ENCODE measurements at regions of chr7 and their contacts with region 1.

Region 1: GRCh38 chr7:49791088-49791741 is 17.8 kb downstream of the VWC2 start:
- DNase-seq: peak in 1 of 2 experiments; percentile 38
- H3K4me3 ChIP-seq: no peak overlapping the region
- H3K4me3 Mint-ChIP-seq: no peak overlapping the region
- H3K27ac Mint-ChIP-seq: no peak overlapping the region
- H3K4me1 ChIP-seq: no peaks in the 10 kb centered on the region
- H3K4me1 Mint-ChIP-seq: no peaks in the 10 kb centered on the region
- H3K27me3 ChIP-seq: no peaks in the 10 kb centered on the region; the same call in 1 of the 2 replicates
- H3K27me3 Mint-ChIP-seq: peaks cover 9% of the 10 kb centered on the region
- CTCF ChIP-seq: peak; percentile 44 to 55

Region 2: DNA sequence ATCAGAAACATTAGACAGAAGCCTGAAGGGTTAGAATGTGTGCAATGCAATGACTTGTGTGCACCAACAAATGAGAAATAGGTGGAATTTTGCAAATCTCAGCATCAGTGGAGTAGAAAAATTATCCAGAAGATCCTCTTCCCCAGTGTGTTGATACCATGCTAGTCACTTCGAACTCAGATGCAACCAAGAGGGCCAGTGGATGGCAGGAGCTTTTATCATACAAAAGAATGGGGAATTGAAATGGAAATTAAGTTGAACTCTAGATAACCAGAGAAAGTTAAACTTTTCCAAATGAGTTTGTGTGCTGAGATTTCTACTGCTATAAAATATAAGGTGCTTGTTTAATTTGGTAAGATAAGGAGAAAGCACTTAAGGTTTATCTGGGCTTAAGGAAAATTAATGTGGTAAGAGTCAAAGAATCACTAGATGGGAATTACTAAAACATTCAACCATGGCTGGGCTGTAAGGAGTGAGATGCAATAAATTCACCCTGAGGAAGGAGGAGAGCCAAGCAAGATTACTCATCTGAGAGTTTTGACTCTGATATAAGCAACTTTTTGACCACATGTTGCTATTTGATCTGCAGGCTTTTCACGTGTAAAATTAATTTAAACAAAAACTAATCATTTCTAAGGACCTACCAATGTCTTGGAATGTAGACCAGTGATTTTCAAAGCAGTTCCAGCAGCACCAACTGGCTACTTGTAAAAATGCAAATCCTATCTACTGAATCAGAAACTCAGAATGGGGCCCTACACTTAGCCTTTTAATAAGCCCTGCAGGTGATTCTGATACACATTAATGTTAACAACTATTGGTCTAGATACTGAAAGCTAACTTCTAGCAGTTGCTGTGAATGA is 753.6 kb before region 1 on chr7:
- CTCF ChIA-PET with region 1: no interaction called
- POLR2A ChIA-PET with region 1: no interaction called
- intact Hi-C with region 1: no loop called
- DNase-seq: no peak
- H3K4me3 ChIP-seq: no peak overlapping the region
- H3K4me3 Mint-ChIP-seq: no peak overlapping the region
- H3K27ac Mint-ChIP-seq: no peak overlapping the region
- H3K4me1 ChIP-seq: no peaks in the 10 kb centered on the region
- H3K4me1 Mint-ChIP-seq: no peaks in the 10 kb centered on the region
- H3K27me3 ChIP-seq: no peaks in the 10 kb centered on the region
- H3K27me3 Mint-ChIP-seq: peaks cover 3% of the 10 kb centered on the region
- CTCF ChIP-seq: no peak

Region 3: DNA sequence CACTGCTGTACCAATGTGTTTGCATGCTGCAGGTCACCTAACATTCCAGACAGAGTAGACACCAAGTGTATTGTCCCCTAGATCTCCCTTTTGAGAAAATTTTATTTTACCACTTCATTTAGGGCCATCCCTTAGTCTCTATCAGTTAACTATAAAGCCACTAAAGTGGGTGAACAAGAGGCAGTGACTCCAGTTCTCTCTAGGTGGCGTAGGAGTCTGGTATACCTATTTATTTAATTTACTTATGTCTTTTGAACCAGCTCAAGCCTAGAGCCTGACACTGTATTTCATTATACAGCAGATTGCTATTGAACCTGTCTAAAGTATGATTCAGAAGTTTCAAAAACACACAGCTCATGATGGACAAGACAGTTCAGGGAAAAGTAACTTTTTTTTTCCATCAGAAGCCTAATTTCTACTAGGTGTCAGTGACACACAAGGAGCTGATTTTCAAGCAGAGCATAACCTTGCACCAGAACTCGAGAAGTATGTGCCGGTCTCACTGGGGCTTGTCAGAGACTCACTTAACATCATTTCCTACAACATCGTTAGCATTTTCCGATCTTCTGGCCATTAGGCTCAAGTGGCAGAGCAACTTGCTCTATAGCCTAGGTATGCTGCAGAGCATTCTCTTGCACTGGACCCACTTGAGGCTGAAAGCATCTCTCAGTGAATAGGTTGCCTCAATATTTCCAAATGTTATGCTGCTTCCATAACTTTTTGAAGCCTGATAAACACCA is 691.5 kb before region 1 on chr7:
- CTCF ChIA-PET with region 1: no interaction called
- POLR2A ChIA-PET with region 1: no interaction called
- intact Hi-C with region 1: loop called (anchors 10 kb)
- DNase-seq: no peak
- H3K4me3 ChIP-seq: no peak overlapping the region
- H3K4me3 Mint-ChIP-seq: no peak overlapping the region
- H3K27ac Mint-ChIP-seq: no peak overlapping the region
- H3K4me1 ChIP-seq: no peaks in the 10 kb centered on the region
- H3K4me1 Mint-ChIP-seq: no peaks in the 10 kb centered on the region
- H3K27me3 ChIP-seq: no peaks in the 10 kb centered on the region
- H3K27me3 Mint-ChIP-seq: peaks cover 5% of the 10 kb centered on the region
- CTCF ChIP-seq: peak in 1 of 2 experiments; percentile 20

Region 4: GRCh38 chr7:49483142-49483541 is 308.1 kb before region 1 on chr7:
- CTCF ChIA-PET with region 1: no interaction called
- POLR2A ChIA-PET with region 1: no interaction called
- intact Hi-C with region 1: loop called (anchors 1 kb)
- DNase-seq: peak; percentile 17 to 35
- H3K4me3 ChIP-seq: no peak overlapping the region
- H3K4me3 Mint-ChIP-seq: no peak overlapping the region
- H3K27ac Mint-ChIP-seq: no peak overlapping the region
- H3K4me1 ChIP-seq: peaks cover 6% of the 10 kb centered on the region; the same call in 1 of the 2 replicates
- H3K4me1 Mint-ChIP-seq: no peaks in the 10 kb centered on the region
- H3K27me3 ChIP-seq: no peaks in the 10 kb centered on the region
- H3K27me3 Mint-ChIP-seq: peaks cover 7% of the 10 kb centered on the region
- CTCF ChIP-seq: peak; percentile 26 to 47

Region 5: GRCh38 chr7:49768835-49769234 is 22.4 kb before region 1 on chr7:
- CTCF ChIA-PET with region 1: no interaction called
- POLR2A ChIA-PET with region 1: no interaction called
- intact Hi-C with region 1: no loop called
- DNase-seq: no peak
- H3K4me3 ChIP-seq: no peak overlapping the region
- H3K4me3 Mint-ChIP-seq: no peak overlapping the region
- H3K27ac Mint-ChIP-seq: no peak overlapping the region
- H3K4me1 ChIP-seq: no peaks in the 10 kb centered on the region
- H3K4me1 Mint-ChIP-seq: no peaks in the 10 kb centered on the region
- H3K27me3 ChIP-seq: no peaks in the 10 kb centered on the region; the same call in 1 of the 2 replicates
- H3K27me3 Mint-ChIP-seq: peaks cover 20% of the 10 kb centered on the region
- CTCF ChIP-seq: no peak

Region 6: GRCh38 chr7:50095634-50096033 is 304.4 kb after region 1 on chr7:
- CTCF ChIA-PET with region 1: no interaction called
- POLR2A ChIA-PET with region 1: no interaction called
- intact Hi-C with region 1: no loop called
- DNase-seq: no peak
- H3K4me3 ChIP-seq: no peak overlapping the region
- H3K4me3 Mint-ChIP-seq: no peak overlapping the region
- H3K27ac Mint-ChIP-seq: no peak overlapping the region
- H3K4me1 ChIP-seq: no peaks in the 10 kb centered on the region
- H3K4me1 Mint-ChIP-seq: no peaks in the 10 kb centered on the region
- H3K27me3 ChIP-seq: no peaks in the 10 kb centered on the region
- H3K27me3 Mint-ChIP-seq: peaks cover 5% of the 10 kb centered on the region
- CTCF ChIP-seq: no peak